Transverse colon (tissue), 4 donors: ENCODE measurements at regions of chr1 and their contacts with region 1.

Region 1: DNA sequence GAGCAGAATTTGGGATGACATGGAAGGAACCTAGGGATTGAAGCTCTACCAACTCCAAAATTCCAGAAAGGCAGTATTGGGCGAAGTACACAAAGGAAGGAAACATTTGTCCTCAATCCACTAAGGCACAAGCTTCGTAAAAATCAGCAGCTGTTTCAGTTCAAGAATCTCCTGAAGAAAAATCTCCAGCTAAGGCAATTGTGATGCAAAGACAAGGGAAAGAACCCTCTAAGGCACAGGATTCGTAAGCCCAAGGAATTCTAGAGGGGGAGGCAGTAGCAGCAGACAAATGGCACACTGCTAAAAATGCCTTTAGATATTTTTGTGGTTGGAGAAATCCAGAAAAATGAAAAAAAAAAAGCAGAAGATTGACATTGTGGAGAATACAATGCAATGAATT is 64.5 kb upstream of the PLPPR5 start:
- DNase-seq: no peak
- H3K4me3 ChIP-seq: no peak overlapping the region
- H3K27ac ChIP-seq: no peak overlapping the region
- H3K4me1 ChIP-seq: no peaks in the 10 kb centered on the region
- H3K27me3 ChIP-seq: no peaks in the 10 kb centered on the region
- CTCF ChIP-seq: no peak
- EP300 ChIP-seq: no peak
- POLR2A ChIP-seq: no peak

Region 2: DNA sequence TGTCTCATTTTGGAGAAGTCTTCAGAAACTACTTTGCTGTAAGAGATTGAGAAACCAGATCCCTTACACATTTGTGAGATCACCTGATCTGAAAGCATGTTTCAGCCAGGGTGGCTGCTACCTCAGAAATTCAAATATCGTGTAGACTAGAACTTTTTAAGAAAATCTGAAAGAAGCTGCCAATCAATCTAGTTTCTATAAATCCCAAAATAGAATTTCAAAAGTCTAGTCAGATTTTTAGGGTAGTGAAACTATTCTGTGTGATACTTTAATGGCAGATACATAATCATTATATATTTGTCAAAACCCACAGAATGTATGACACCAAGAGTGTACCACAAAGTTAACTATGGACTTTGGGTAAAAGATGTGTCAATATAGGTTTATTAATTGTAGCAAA is 15.4 kb after region 1 on chr1:
- in situ Hi-C with region 1: no loop called
- intact Hi-C with region 1: loop called (anchors 1 kb)
- DNase-seq: no peak
- H3K4me3 ChIP-seq: no peak overlapping the region
- H3K27ac ChIP-seq: no peak overlapping the region
- H3K4me1 ChIP-seq: no peaks in the 10 kb centered on the region
- H3K27me3 ChIP-seq: no peaks in the 10 kb centered on the region
- CTCF ChIP-seq: no peak
- EP300 ChIP-seq: no peak
- POLR2A ChIP-seq: no peak